Right cardiac atrium (tissue), 5 donors: ENCODE measurements at regions of chr6 and their contacts with region 1.

Region 1: GRCh38 chr6:34248727-34249551 is at the start of gene SMIM29:
- DNase-seq: peak; percentile 97 to 99 (median 98)
- ATAC-seq: peak; percentile 91 to 94
- H3K4me3 ChIP-seq: peak within 1 kb of the TSS; percentile 82
- H3K27ac ChIP-seq: peak within 1 kb of the TSS; percentile 96
- H3K4me1 ChIP-seq: peaks cover 2% of the 10 kb centered on the region
- H3K27me3 ChIP-seq: no peaks in the 10 kb centered on the region
- total RNA-seq, gene SMIM29: 17.0 to 25.5 (median 22.4) TPM

Region 2: GRCh38 chr6:34414999-34415858 is 166.3 kb after region 1 on chr6:
- intact Hi-C with region 1: loop called (anchors 1 to 5 kb)
- DNase-seq: peak in 2 of 3 donors; percentile 44 to 76
- ATAC-seq: peak; percentile 91 to 94
- H3K4me3 ChIP-seq: no peak overlapping the region
- H3K27ac ChIP-seq: no peak overlapping the region
- H3K4me1 ChIP-seq: no peaks in the 10 kb centered on the region
- H3K27me3 ChIP-seq: no peaks in the 10 kb centered on the region